ENCODE measurements at regions of chr11 and their contacts with region 1.

Region 1: DNA sequence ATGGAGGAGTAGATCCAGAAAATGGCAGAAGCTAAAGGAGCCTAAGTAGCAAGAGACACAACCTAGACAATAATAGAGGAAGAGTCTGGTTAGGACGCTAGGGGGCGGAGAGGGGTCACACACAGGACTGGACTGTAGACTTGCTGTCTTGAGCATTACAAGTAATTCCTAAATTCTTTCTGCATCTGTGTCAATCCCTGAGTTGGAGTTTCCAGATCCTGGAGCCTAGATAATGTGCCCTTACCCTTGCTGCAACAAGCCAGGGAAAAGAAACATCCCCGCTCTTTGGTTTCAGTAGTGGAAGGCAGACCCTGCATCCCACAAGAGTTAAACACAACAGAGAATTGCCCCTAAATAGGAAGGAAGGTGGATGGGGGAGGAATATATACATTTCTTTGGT is 14.9 kb upstream of the CCDC73 start:
- DNase-seq: peak; percentile 82
- H3K4me3 Mint-ChIP-seq: no peak overlapping the region
- H3K27ac Mint-ChIP-seq: no peak overlapping the region
- H3K4me1 Mint-ChIP-seq: no peaks in the 10 kb centered on the region
- H3K27me3 Mint-ChIP-seq: no peaks in the 10 kb centered on the region
- CTCF ChIP-seq: peak; percentile 83

Region 2: GRCh38 chr11:32312865-32313403 is 496.4 kb before region 1 on chr11:
- CTCF ChIA-PET with region 1: no interaction called
- POLR2A ChIA-PET with region 1: no interaction called
- intact Hi-C with region 1: no loop called
- DNase-seq: peak; percentile 83
- H3K4me3 Mint-ChIP-seq: no peak overlapping the region
- H3K27ac Mint-ChIP-seq: no peak overlapping the region
- H3K4me1 Mint-ChIP-seq: peaks cover 6% of the 10 kb centered on the region
- H3K27me3 Mint-ChIP-seq: no peaks in the 10 kb centered on the region
- CTCF ChIP-seq: peak; percentile 52

Region 3: DNA sequence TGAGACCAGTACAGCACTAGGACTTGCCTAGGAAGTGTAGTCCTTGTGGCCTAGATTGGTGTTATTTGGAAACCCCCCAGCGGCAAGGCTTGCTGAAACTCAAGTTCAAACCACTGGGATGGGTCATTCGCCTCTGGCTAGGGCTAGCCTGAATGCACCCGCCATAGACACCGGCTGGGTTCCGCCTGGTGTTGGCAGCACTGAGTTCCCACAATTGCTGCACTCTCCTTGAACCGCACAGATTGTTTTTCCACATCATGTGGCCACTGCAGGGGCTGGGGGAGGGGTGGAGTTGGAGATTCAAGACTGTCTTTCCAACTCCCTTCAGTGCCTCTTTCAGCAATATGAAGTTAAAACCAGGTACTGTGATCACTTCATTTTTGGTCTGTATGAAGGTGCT is 57.9 kb before region 1 on chr11:
- CTCF ChIA-PET with region 1: no interaction called
- POLR2A ChIA-PET with region 1: no interaction called
- intact Hi-C with region 1: no loop called
- DNase-seq: no peak
- H3K4me3 Mint-ChIP-seq: no peak overlapping the region
- H3K27ac Mint-ChIP-seq: no peak overlapping the region
- H3K4me1 Mint-ChIP-seq: no peaks in the 10 kb centered on the region
- H3K27me3 Mint-ChIP-seq: peaks cover 20% of the 10 kb centered on the region
- CTCF ChIP-seq: no peak

Region 4: DNA sequence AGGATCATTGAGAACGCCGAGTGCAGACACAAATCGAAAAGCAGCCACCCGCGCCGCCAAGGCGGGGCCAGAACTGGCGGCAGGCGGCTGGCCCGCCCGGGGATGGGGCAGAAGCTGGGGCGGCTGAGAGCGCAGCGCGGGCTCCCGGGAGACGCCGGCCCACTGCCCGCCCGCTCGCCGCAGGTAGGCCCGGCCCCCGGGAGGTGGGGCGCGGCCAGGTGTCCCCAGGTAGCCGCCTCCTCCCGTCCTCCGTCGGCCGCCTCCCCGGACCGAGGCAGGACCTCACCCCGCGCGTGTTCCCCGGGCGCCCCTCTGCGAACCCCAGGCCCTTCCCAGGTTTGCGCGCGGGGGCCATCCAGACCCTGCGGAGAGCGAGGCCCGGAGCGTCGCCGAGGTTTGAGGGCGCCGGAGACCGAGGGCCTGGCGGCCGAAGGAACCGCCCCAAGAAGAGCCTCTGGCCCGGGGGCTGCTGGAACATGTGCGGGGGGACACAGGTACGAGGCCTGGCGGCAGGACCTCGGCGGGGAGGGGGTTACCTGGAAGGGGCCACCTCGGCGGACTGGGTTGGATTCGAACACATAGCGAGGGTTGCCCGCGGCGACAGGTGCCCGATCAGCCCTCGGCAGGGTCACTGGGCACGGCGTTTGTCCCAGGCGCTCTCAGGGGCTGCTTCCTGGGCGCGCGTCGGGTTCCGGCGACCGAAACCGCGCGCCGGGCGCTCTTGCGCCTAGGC is 20.5 kb after region 1 on chr11 and contains the start of gene PRRG4:
- CTCF ChIA-PET with region 1: interaction called, 13 read pairs
- POLR2A ChIA-PET with region 1: no interaction called
- intact Hi-C with region 1: no loop called
- DNase-seq: peak; percentile 77
- H3K4me3 Mint-ChIP-seq: peak within 1 kb of the TSS; percentile 81
- H3K27ac Mint-ChIP-seq: peak within 1 kb of the TSS; percentile 81
- H3K4me1 Mint-ChIP-seq: no peaks in the 10 kb centered on the region
- H3K27me3 Mint-ChIP-seq: no peaks in the 10 kb centered on the region
- CTCF ChIP-seq: no peak
- total RNA-seq, gene PRRG4: 1.1 and 1.2 TPM in 2 replicates

Region 5: DNA sequence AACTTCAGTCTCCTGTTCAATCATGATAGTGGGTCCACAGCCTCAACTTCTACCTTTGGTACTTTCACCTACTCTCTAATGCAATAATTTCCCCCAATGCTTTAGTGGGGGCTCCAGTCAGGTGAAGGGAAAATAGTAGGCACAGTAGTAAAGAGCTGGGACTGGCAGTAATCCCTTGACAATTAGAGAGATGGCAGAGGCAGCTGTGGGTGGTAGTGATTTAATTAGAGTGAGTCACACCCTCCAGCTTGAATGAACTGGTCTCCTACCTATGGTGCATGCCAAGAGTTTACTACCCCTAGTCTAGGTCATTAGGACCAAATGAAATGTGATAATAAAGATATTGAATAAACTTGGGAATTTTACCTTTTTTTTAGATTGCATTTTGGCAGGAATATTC is 29.2 kb after region 1 on chr11:
- CTCF ChIA-PET with region 1: interaction called, 13 read pairs
- POLR2A ChIA-PET with region 1: no interaction called
- intact Hi-C with region 1: no loop called
- DNase-seq: peak; percentile 87
- H3K4me3 Mint-ChIP-seq: no peak overlapping the region
- H3K27ac Mint-ChIP-seq: no peak overlapping the region
- H3K4me1 Mint-ChIP-seq: no peaks in the 10 kb centered on the region
- H3K27me3 Mint-ChIP-seq: no peaks in the 10 kb centered on the region
- CTCF ChIP-seq: no peak

Region 6: DNA sequence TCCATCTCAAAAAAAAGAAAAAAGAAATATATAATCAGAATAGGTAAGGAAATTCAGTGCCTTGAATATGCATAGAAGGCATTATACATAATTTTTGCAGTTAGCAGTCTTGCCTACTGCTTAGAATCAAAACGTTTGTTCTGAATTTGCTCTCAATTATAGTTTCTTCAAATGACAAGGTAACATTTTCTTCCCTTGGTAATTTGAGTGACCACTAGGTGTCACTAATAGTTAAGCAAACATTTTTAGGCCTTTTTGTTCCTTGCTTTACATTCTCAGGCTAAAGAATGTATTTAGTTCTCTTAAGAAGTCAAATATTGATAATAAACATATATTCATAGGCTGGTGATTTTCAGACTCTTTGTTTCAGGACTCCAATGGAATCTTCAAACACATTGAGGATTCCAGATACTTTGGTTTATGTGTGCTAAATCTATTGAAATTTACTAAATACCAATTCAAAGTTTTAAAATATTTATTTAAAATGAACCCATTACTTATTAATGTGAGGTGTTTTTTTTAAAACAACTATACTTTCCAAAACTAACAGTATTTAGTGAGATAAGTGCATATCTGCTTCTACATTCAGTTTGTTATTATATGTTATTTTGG is 151.3 kb after region 1 on chr11:
- CTCF ChIA-PET with region 1: interaction called, 4 read pairs
- POLR2A ChIA-PET with region 1: no interaction called
- intact Hi-C with region 1: loop called (anchors 5 kb)
- DNase-seq: peak; percentile 63
- H3K4me3 Mint-ChIP-seq: no peak overlapping the region
- H3K27ac Mint-ChIP-seq: no peak overlapping the region
- H3K4me1 Mint-ChIP-seq: no peaks in the 10 kb centered on the region
- H3K27me3 Mint-ChIP-seq: no peaks in the 10 kb centered on the region
- CTCF ChIP-seq: peak; percentile 54

Region 7: GRCh38 chr11:33222052-33222750 is 412.9 kb after region 1 on chr11:
- CTCF ChIA-PET with region 1: no interaction called
- POLR2A ChIA-PET with region 1: no interaction called
- intact Hi-C with region 1: no loop called
- DNase-seq: no peak
- H3K4me3 Mint-ChIP-seq: no peak overlapping the region
- H3K27ac Mint-ChIP-seq: no peak overlapping the region
- H3K4me1 Mint-ChIP-seq: peaks cover under 1% of the 10 kb centered on the region
- H3K27me3 Mint-ChIP-seq: no peaks in the 10 kb centered on the region
- CTCF ChIP-seq: no peak

Measured in MCF 10A (cell line).